ENCODE measurements at regions of chr10 and their contacts with region 1.

Region 1: DNA sequence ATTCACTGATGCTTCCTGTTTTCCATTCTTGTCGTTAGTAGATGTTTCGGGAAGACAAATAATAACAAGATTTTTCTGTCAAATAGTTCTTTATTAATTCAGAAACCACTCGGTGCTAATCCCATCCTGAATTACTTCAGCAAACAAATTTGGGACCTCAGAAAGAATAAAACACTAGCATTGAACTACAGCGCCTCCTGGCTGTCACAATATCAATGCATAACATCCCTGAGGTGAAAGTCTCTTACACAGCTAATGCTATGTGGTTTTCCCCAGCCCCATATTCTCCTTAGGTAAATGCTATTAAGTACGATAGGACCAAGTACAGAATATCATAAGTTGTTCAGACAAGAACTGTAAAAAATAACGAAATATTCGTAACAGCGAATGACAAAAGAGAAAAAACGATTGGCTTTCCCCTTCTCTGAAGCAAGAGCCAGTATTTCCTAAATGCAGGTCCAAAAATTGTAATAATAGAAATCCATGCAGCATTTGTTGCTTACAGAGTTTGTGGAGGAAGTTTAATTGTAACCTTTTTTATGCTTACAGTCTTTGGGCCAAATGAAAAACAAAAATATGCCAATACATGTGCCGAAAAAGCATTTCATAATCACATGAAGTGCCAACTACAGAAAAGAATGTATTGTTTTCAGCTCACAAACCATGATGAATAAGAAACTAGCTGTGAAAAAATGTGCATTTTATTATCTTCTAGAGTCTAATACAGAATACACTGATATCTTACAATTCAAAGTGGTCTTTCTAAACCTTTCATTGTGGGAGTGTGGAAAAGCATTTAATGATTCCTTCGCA is 47.3 kb downstream of the MYPN start:
- DNase-seq: peak; percentile 76
- ATAC-seq: peak; percentile 13
- H3K4me3 ChIP-seq: no peak overlapping the region
- H3K27ac ChIP-seq: peak overlapping the region; percentile 30; the same call in 1 of the 2 replicates
- H3K4me1 ChIP-seq: peaks cover 16% of the 10 kb centered on the region
- H3K27me3 ChIP-seq: no peaks in the 10 kb centered on the region
- CTCF ChIP-seq: peak; percentile 90
- POLR2A ChIP-seq: 0 out of 2 replicates have a peak, but pooled peaks have one; percentile 31
- RAD21 ChIP-seq: peak; percentile 91

Region 2: DNA sequence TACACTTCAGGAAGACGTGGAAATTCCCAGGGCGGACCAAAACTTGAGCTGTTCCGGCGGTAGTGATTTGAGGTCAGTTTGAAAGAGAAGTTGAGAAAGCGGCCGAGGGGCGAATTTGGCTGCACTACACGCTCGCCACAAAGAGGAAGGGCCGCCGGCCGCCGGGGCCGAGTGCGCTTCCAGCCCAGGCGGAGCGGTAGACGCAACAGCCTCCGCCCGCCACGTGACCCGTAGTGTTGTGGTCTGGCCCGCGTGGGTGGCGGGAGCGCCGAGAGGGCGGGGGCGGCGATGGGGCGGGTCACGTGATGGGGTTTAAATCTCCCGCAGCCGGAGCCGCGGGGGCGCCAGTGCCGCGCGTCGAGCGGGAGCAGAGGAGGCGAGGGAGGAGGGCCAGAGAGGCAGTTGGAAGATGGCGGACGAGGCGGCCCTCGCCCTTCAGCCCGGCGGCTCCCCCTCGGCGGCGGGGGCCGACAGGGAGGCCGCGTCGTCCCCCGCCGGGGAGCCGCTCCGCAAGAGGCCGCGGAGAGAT is 272.2 kb before region 1 on chr10 and contains the start of gene SIRT1:
- CTCF ChIA-PET with region 1: no interaction called
- POLR2A ChIA-PET with region 1: no interaction called
- dilution Hi-C with region 1: no loop called
- in situ Hi-C with region 1: no loop called
- intact Hi-C with region 1: loop called (anchors 1 kb)
- DNase-seq: peak; percentile 90
- ATAC-seq: peak; percentile 91
- H3K4me3 ChIP-seq: peak within 1 kb of the TSS; percentile 56
- H3K27ac ChIP-seq: peak within 1 kb of the TSS; percentile 55
- H3K4me1 ChIP-seq: peaks cover 3% of the 10 kb centered on the region; the same call in 1 of the 2 replicates
- H3K27me3 ChIP-seq: no peaks in the 10 kb centered on the region
- CTCF ChIP-seq: no peak
- POLR2A ChIP-seq: peak; percentile 98
- RAD21 ChIP-seq: no peak
- total RNA-seq, gene SIRT1: 12.9 and 20.6 TPM in 2 replicates

Region 3: GRCh38 chr10:67912339-67912946 is 244.1 kb before region 1 on chr10:
- CTCF ChIA-PET with region 1: no interaction called
- POLR2A ChIA-PET with region 1: no interaction called
- dilution Hi-C with region 1: no loop called
- in situ Hi-C with region 1: no loop called
- intact Hi-C with region 1: no loop called
- DNase-seq: peak; percentile 25
- ATAC-seq: peak; percentile 21; the same call in 1 of the 2 replicates
- H3K4me3 ChIP-seq: no peak overlapping the region
- H3K27ac ChIP-seq: no peak overlapping the region
- H3K4me1 ChIP-seq: no peaks in the 10 kb centered on the region
- H3K27me3 ChIP-seq: no peaks in the 10 kb centered on the region
- CTCF ChIP-seq: no peak
- POLR2A ChIP-seq: no peak
- RAD21 ChIP-seq: no peak

Region 4: DNA sequence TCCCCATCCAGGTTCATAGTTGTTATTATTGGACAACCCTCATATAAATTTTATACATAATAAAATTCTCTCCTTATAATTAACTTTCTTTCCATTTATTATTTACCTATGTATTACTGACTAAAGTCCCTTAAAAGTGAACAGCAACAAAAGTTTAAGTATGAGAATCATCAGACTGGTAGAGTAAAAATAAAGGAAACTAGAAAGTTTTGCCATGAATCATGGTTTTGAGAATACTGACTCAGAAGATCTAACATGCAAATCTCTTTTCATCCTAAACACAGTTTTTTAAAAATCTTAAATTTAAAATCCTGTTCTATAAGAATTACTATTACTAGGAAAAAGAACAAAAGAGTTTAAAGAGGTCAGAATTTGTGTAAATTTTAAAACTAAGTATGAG is 113.5 kb before region 1 on chr10:
- CTCF ChIA-PET with region 1: no interaction called
- POLR2A ChIA-PET with region 1: no interaction called
- dilution Hi-C with region 1: no loop called
- in situ Hi-C with region 1: no loop called
- intact Hi-C with region 1: no loop called
- DNase-seq: peak; percentile 60
- ATAC-seq: peak; percentile 42; the same call in 1 of the 2 replicates
- H3K4me3 ChIP-seq: no peak overlapping the region
- H3K27ac ChIP-seq: no peak overlapping the region
- H3K4me1 ChIP-seq: peaks cover 8% of the 10 kb centered on the region; the same call in 1 of the 2 replicates
- H3K27me3 ChIP-seq: no peaks in the 10 kb centered on the region
- CTCF ChIP-seq: no peak
- POLR2A ChIP-seq: no peak
- RAD21 ChIP-seq: no peak

Region 5: DNA sequence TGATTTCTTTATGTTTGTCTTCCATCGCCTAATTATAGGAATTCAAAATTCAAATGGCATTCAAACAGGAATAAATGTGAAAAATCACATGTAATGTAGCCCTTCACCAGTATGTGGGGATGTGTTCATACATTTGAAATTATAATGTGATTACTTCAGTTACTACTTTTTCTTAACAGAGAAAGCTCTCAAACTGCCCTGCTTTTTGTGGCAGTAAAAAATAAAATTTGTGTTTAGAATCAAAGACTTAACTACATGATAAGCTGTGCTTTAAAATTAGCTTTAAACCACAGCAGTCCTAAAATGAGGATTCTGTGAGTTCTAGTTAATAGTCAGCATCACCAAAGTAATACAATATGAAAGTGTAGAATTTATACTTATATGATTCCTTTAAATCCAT is 73.7 kb before region 1 on chr10:
- CTCF ChIA-PET with region 1: interaction called, 40 read pairs
- POLR2A ChIA-PET with region 1: no interaction called
- dilution Hi-C with region 1: no loop called
- in situ Hi-C with region 1: loop called (anchors 5 kb)
- intact Hi-C with region 1: loop called (anchors 1 kb)
- DNase-seq: peak; percentile 67
- ATAC-seq: peak; percentile 79
- H3K4me3 ChIP-seq: no peak overlapping the region
- H3K27ac ChIP-seq: peak overlapping the region; percentile 23; the same call in 1 of the 2 replicates
- H3K4me1 ChIP-seq: peaks cover 10% of the 10 kb centered on the region
- H3K27me3 ChIP-seq: no peaks in the 10 kb centered on the region
- CTCF ChIP-seq: peak; percentile 77
- POLR2A ChIP-seq: no peak
- RAD21 ChIP-seq: peak; percentile 83

Region 6: GRCh38 chr10:68095176-68095575 is 61.4 kb before region 1 on chr10:
- CTCF ChIA-PET with region 1: interaction called, 20 read pairs
- POLR2A ChIA-PET with region 1: no interaction called
- dilution Hi-C with region 1: no loop called
- in situ Hi-C with region 1: no loop called
- intact Hi-C with region 1: no loop called
- DNase-seq: peak; percentile 78
- ATAC-seq: peak; percentile 56
- H3K4me3 ChIP-seq: no peak overlapping the region
- H3K27ac ChIP-seq: peak overlapping the region; percentile 90
- H3K4me1 ChIP-seq: peaks cover 14% of the 10 kb centered on the region
- H3K27me3 ChIP-seq: no peaks in the 10 kb centered on the region
- CTCF ChIP-seq: no peak
- POLR2A ChIP-seq: no peak
- RAD21 ChIP-seq: no peak

Region 7: GRCh38 chr10:68208424-68209042 is 52.0 kb after region 1 on chr10:
- CTCF ChIA-PET with region 1: interaction called, 5 read pairs
- POLR2A ChIA-PET with region 1: no interaction called
- dilution Hi-C with region 1: no loop called
- in situ Hi-C with region 1: no loop called
- intact Hi-C with region 1: loop called (anchors 2 kb)
- DNase-seq: peak; percentile 79
- ATAC-seq: peak; percentile 94
- H3K4me3 ChIP-seq: no peak overlapping the region
- H3K27ac ChIP-seq: no peak overlapping the region
- H3K4me1 ChIP-seq: peaks cover 2% of the 10 kb centered on the region
- H3K27me3 ChIP-seq: no peaks in the 10 kb centered on the region
- CTCF ChIP-seq: peak; percentile 76
- POLR2A ChIP-seq: no peak
- RAD21 ChIP-seq: peak; percentile 87

Measured in IMR-90 (cell line).